H1 (cell line): ENCODE measurements at regions of chr3 and their contacts with region 1.

Region 1: DNA sequence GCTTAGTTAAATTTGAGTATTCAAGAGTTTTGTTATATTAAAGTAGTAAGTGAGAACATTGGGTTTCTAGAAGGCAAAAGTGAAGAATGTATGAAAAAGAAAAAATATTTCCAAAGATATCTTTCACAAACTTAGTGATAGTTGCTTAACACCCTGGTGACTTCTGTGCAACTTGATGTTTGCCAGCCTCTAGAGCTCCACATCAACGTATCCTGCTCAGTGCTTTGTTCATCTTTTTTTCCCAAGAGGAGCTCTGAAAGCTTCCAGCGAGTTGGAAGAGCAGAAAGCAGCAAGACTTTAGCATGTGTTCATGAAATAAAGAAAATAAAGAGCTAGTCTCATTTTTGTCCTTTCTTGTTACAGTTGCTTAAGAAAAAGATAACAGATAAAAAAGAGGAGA is 225.5 kb downstream of the GRM7 start:
- DNase-seq: no peak
- H3K4me3 ChIP-seq: no peak overlapping the region
- H3K27ac ChIP-seq: no peak overlapping the region
- H3K4me1 ChIP-seq: no peaks in the 10 kb centered on the region
- H3K27me3 ChIP-seq: no peaks in the 10 kb centered on the region
- CTCF ChIP-seq: no peak
- EP300 ChIP-seq: no peak
- POLR2A ChIP-seq: no peak
- RAD21 ChIP-seq: no peak

Region 2: DNA sequence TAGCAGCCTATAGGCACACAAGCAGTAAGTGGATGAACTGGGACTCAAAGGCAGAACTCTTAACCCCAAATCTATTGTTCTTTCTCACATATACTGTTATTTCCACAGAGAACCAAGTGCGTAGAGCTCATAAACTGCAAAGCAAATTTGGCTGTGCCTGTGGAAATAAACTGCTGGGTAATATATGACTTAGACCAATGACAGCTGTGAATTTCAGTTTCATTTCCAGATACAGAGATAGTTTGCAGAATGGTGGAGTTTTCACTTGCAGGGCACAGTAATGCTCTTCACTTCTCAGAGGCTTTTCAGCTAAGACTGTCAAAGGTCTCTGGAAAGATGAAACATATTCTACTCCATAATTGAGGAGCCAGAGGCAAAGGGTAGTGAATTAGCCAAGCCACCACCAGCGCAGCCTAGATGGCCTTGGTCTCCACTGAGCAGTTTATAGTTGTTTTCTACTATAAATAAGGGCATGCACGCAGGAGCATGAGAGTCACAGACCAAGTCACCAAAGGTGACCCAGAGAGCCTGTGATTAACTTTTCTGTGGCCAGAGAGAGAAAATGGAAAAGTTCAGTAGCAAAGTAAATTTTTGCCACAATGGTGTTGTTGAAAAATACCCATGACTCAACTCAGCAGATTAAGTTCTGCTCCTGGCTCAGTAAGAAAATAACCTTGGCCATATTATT is 406.2 kb before region 1 on chr3:
- CTCF ChIA-PET with region 1: no interaction called
- POLR2A ChIA-PET with region 1: no interaction called
- DNase-seq: no peak
- H3K4me3 ChIP-seq: no peak overlapping the region
- H3K27ac ChIP-seq: no peak overlapping the region
- H3K4me1 ChIP-seq: no peaks in the 10 kb centered on the region
- H3K27me3 ChIP-seq: no peaks in the 10 kb centered on the region
- CTCF ChIP-seq: no peak
- EP300 ChIP-seq: no peak
- POLR2A ChIP-seq: no peak
- RAD21 ChIP-seq: no peak

Region 3: GRCh38 chr3:7075901-7076300 is 10.5 kb before region 1 on chr3:
- CTCF ChIA-PET with region 1: interaction called, 11 read pairs
- POLR2A ChIA-PET with region 1: no interaction called
- DNase-seq: no peak
- H3K4me3 ChIP-seq: no peak overlapping the region
- H3K27ac ChIP-seq: no peak overlapping the region
- H3K4me1 ChIP-seq: no peaks in the 10 kb centered on the region
- H3K27me3 ChIP-seq: no peaks in the 10 kb centered on the region
- CTCF ChIP-seq: peak in 2 of 3 experiments; percentile 25 to 33; a peak in 2 of 4 replicates
- EP300 ChIP-seq: no peak
- POLR2A ChIP-seq: no peak
- RAD21 ChIP-seq: peak; percentile 21 to 34; a peak in 3 of 4 replicates